ENCODE measurements at regions of chr16 and their contacts with region 1.

Region 1: GRCh38 chr16:23254338-23254737 is 47.8 kb upstream of the SCNN1B start:
- DNase-seq: peak; percentile 75
- H3K4me3 Mint-ChIP-seq: no peak overlapping the region
- H3K27ac Mint-ChIP-seq: peak overlapping the region; percentile 82
- H3K4me1 Mint-ChIP-seq: peaks cover 40% of the 10 kb centered on the region
- H3K27me3 Mint-ChIP-seq: no peaks in the 10 kb centered on the region
- CTCF ChIP-seq: no peak

Region 2: GRCh38 chr16:23182460-23183309 is 71.7 kb before region 1 on chr16 and contains the start of gene SCNN1G:
- CTCF ChIA-PET with region 1: interaction called, 6 read pairs
- POLR2A ChIA-PET with region 1: interaction called, 9 read pairs
- intact Hi-C with region 1: loop called (anchors 2 kb)
- DNase-seq: peak; percentile 89
- H3K4me3 Mint-ChIP-seq: peak within 1 kb of the TSS; percentile 84
- H3K27ac Mint-ChIP-seq: peak within 1 kb of the TSS; percentile 35
- H3K4me1 Mint-ChIP-seq: peaks cover 24% of the 10 kb centered on the region
- H3K27me3 Mint-ChIP-seq: no peaks in the 10 kb centered on the region
- CTCF ChIP-seq: peak; percentile 99
- total RNA-seq, gene SCNN1G: 7.9 and 11.9 TPM in 2 replicates

Region 3: GRCh38 chr16:23217646-23218045 is 36.7 kb before region 1 on chr16:
- CTCF ChIA-PET with region 1: interaction called, 4 read pairs
- POLR2A ChIA-PET with region 1: interaction called, 13 read pairs
- intact Hi-C with region 1: no loop called
- DNase-seq: peak; percentile 17
- H3K4me3 Mint-ChIP-seq: no peak overlapping the region
- H3K27ac Mint-ChIP-seq: peak overlapping the region; percentile 9
- H3K4me1 Mint-ChIP-seq: peaks cover 5% of the 10 kb centered on the region
- H3K27me3 Mint-ChIP-seq: no peaks in the 10 kb centered on the region
- CTCF ChIP-seq: no peak

Region 4: DNA sequence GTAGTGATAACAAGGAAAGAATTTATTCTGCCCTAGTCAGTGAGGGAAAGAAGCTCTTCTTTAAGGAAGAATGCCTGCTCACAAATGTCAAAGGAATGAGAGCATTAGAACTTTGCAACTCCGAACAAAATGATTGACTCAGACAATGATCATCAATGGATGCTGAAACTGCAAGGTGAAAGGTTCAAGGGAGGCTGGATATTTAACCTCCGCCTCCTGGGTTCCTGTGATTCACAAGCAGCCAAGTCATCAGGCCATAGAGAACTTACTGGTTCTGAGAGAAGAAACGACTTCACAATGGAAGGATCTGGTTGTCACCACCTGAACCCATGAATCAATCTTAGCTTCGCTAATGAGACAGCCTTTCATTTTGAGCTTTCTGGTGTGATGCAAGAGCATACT is 31.8 kb after region 1 on chr16:
- CTCF ChIA-PET with region 1: interaction called, 12 read pairs
- POLR2A ChIA-PET with region 1: interaction called, 204 read pairs
- intact Hi-C with region 1: no loop called
- DNase-seq: peak; percentile 68
- H3K4me3 Mint-ChIP-seq: no peak overlapping the region
- H3K27ac Mint-ChIP-seq: peak overlapping the region; percentile 59
- H3K4me1 Mint-ChIP-seq: peaks cover 16% of the 10 kb centered on the region
- H3K27me3 Mint-ChIP-seq: no peaks in the 10 kb centered on the region
- CTCF ChIP-seq: no peak

Region 5: GRCh38 chr16:23362460-23363317 is 108.4 kb after region 1 on chr16:
- CTCF ChIA-PET with region 1: interaction called, 3 read pairs
- POLR2A ChIA-PET with region 1: interaction called, 26 read pairs
- intact Hi-C with region 1: no loop called
- DNase-seq: peak; percentile 95
- H3K4me3 Mint-ChIP-seq: no peak overlapping the region
- H3K27ac Mint-ChIP-seq: peak overlapping the region; percentile 68
- H3K4me1 Mint-ChIP-seq: peaks cover 41% of the 10 kb centered on the region
- H3K27me3 Mint-ChIP-seq: no peaks in the 10 kb centered on the region
- CTCF ChIP-seq: no peak

Region 6: GRCh38 chr16:23374731-23375510 is 120.6 kb after region 1 on chr16:
- CTCF ChIA-PET with region 1: no interaction called
- POLR2A ChIA-PET with region 1: no interaction called
- intact Hi-C with region 1: no loop called
- DNase-seq: no peak
- H3K4me3 Mint-ChIP-seq: no peak overlapping the region
- H3K27ac Mint-ChIP-seq: no peak overlapping the region
- H3K4me1 Mint-ChIP-seq: peaks cover 5% of the 10 kb centered on the region
- H3K27me3 Mint-ChIP-seq: no peaks in the 10 kb centered on the region
- CTCF ChIP-seq: no peak

Region 7: GRCh38 chr16:23423496-23424049 is 169.2 kb after region 1 on chr16:
- CTCF ChIA-PET with region 1: interaction called, 4 read pairs
- POLR2A ChIA-PET with region 1: interaction called, 38 read pairs
- intact Hi-C with region 1: loop called (anchors 5 kb)
- DNase-seq: peak; percentile 99
- H3K4me3 Mint-ChIP-seq: peak overlapping the region; percentile 54
- H3K27ac Mint-ChIP-seq: peak overlapping the region; percentile 81
- H3K4me1 Mint-ChIP-seq: peaks cover 23% of the 10 kb centered on the region
- H3K27me3 Mint-ChIP-seq: no peaks in the 10 kb centered on the region
- CTCF ChIP-seq: no peak